CD4-positive, alpha-beta T cell (primary cell): ENCODE measurements at regions of chr12 and their contacts with region 1.

Region 1: DNA sequence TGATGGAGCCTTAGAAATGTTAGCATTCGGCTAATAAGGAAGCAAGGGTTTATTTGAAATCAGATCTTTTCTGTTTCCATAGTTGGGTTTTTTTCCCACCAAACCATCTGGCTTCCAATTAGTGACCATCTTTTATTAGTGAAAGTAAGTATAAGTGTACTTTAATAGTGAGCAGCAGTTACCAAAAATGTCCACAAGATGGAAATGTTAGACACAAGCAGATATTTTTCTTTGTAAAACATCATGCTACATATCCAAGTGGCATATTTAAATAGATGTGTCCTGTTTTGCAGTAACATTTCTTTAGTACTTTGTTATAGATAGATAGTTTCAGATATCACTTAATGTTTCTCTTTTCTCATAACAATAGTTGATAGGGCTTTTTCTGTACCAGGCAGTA is 28.8 kb downstream of the YEATS4 start:
- DNase-seq: peak in 3 of 14 experiments; percentile 17 to 32 (median 27)
- ATAC-seq: no peak
- H3K4me3 ChIP-seq: no peak overlapping the region
- H3K4me3 Mint-ChIP-seq: no peak overlapping the region
- H3K27ac ChIP-seq: no peak overlapping the region
- H3K27ac Mint-ChIP-seq: no peak overlapping the region
- H3K4me1 ChIP-seq: no peaks in the 10 kb centered on the region
- H3K4me1 Mint-ChIP-seq: no peaks in the 10 kb centered on the region
- H3K27me3 ChIP-seq: no peaks in the 10 kb centered on the region
- H3K27me3 Mint-ChIP-seq: no peaks in the 10 kb centered on the region
- CTCF ChIP-seq: no peak

Region 2: DNA sequence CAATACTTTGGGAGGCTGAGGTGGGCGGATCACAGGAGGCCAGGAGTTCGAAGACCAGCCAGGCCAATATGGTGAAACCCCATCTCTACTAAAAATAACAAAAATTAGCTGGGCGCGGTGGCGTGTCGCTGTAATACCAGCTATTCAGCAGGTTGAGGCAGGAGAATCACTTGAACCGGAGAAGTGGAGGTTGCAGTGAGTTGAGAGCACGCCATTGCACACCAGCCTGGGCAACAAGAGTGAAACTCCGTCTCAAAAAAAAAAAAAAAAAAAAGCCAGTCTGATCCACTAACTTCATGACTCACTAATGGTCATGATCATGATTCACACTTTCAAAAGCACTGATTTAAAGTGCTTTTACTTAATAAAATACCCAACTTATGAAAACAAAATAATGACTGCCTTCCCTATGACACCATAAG is 417.0 kb before region 1 on chr12:
- CTCF ChIA-PET with region 1: no interaction called
- POLR2A ChIA-PET with region 1: no interaction called
- intact Hi-C with region 1: no loop called
- DNase-seq: peak in 1 of 14 experiments; percentile 23
- ATAC-seq: no peak
- H3K4me3 ChIP-seq: no peak overlapping the region
- H3K4me3 Mint-ChIP-seq: no peak overlapping the region
- H3K27ac ChIP-seq: no peak overlapping the region
- H3K27ac Mint-ChIP-seq: no peak overlapping the region
- H3K4me1 ChIP-seq: no peaks in the 10 kb centered on the region
- H3K4me1 Mint-ChIP-seq: no peaks in the 10 kb centered on the region
- H3K27me3 ChIP-seq: no peaks in the 10 kb centered on the region
- H3K27me3 Mint-ChIP-seq: no peaks in the 10 kb centered on the region
- CTCF ChIP-seq: no peak

Region 3: DNA sequence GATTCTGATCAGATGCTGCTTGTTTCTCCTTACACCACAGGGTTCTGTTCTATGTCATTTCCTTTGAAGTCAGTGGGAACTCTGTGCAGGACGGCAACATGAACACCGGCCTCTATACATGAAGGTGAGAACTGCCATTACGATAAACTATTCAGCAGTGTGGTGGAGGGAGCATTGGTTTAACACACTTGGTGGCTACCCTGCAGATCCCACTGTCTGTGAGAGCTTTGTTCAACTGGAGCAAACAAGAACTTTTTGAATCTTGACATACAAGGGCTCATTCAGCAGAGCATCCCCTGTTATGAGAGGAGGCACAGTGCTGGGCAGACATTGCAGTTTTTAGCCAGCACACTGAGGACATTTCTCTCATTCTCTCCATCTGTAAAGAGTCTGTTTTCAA is 71.1 kb after region 1 on chr12:
- CTCF ChIA-PET with region 1: no interaction called
- POLR2A ChIA-PET with region 1: no interaction called
- intact Hi-C with region 1: loop called in 1 of 2 experiments (anchors 5 kb)
- DNase-seq: no peak
- ATAC-seq: no peak
- H3K4me3 ChIP-seq: no peak overlapping the region
- H3K4me3 Mint-ChIP-seq: no peak overlapping the region
- H3K27ac ChIP-seq: no peak overlapping the region
- H3K27ac Mint-ChIP-seq: no peak overlapping the region
- H3K4me1 ChIP-seq: no peaks in the 10 kb centered on the region
- H3K4me1 Mint-ChIP-seq: no peaks in the 10 kb centered on the region
- H3K27me3 ChIP-seq: peaks cover 0 to 2% of the 10 kb centered on the region in 2 experiments
- H3K27me3 Mint-ChIP-seq: peaks cover 5% of the 10 kb centered on the region
- CTCF ChIP-seq: no peak